Activated CD4-positive, alpha-beta T cell treated with anti-CD3 and anti-CD28 coated beads, Interleukin-2, amount 10 ng/mL, durations not matched to agents 24 days and 14 days (primary cell): ENCODE measurements at regions of chr7 and their contacts with region 1.

Region 1: GRCh38 chr7:150620617-150621371 is 11.4 kb downstream of the GIMAP6 start:
- DNase-seq: peak; percentile 67
- H3K4me3 Mint-ChIP-seq: peak overlapping the region; percentile 63
- H3K27ac Mint-ChIP-seq: peak overlapping the region; percentile 85
- H3K4me1 Mint-ChIP-seq: peaks cover 51% of the 10 kb centered on the region
- H3K27me3 Mint-ChIP-seq: no peaks in the 10 kb centered on the region

Region 2: DNA sequence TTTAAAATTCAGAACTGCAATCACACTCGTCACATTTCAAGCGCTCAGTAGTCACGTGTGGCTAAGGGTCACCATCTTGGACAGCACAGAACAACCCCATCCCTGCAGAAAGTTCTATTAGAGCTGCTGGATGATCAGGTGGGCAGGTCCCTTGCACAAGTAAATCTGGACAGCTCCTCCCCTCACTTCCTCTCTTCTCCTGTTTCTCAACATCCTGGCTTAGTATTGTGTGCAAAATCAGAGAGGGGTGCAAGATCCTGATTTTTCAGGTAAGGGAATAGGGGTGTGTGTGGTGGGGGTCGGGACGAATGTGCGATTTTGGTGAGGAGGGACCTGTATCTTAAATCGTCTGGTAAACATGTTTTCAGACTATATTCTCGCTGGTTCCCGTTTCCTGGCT is 53.6 kb before region 1 on chr7 and contains the start of gene GIMAP4:
- intact Hi-C with region 1: loop called (anchors 1 kb)
- DNase-seq: peak; percentile 77
- H3K4me3 Mint-ChIP-seq: peak within 1 kb of the TSS; percentile 86
- H3K27ac Mint-ChIP-seq: peak within 1 kb of the TSS; percentile 95
- H3K4me1 Mint-ChIP-seq: peaks cover 59% of the 10 kb centered on the region
- H3K27me3 Mint-ChIP-seq: no peaks in the 10 kb centered on the region
- total RNA-seq, gene GIMAP4: 61.1 and 62.7 TPM in 2 replicates

Region 3: DNA sequence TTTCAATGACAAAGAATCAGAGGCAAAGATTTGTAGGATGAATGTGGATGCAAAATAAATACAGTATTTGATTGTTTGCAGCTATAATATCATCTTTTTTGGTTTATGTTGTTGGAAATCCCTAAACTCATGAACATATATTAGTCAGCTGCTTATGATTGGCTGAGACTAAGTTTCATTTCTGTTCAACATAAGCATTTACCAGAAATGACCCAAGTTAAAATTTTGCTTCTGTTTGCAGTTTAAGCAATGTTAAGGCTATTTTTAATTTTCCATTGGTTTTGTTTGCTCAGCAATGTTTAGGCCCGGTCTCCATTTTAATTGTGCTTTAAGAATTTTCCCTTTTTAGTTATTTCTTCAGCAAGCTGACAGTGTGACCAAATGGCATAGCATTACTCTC is 10.6 kb before region 1 on chr7:
- intact Hi-C with region 1: no loop called
- DNase-seq: no peak
- H3K4me3 Mint-ChIP-seq: peak overlapping the region; percentile 46
- H3K27ac Mint-ChIP-seq: peak overlapping the region; percentile 92
- H3K4me1 Mint-ChIP-seq: peaks cover 56% of the 10 kb centered on the region
- H3K27me3 Mint-ChIP-seq: no peaks in the 10 kb centered on the region